Common myeloid progenitor, CD34-positive (primary cell): ENCODE measurements at regions of chr6 and their contacts with region 1.

Region 1: DNA sequence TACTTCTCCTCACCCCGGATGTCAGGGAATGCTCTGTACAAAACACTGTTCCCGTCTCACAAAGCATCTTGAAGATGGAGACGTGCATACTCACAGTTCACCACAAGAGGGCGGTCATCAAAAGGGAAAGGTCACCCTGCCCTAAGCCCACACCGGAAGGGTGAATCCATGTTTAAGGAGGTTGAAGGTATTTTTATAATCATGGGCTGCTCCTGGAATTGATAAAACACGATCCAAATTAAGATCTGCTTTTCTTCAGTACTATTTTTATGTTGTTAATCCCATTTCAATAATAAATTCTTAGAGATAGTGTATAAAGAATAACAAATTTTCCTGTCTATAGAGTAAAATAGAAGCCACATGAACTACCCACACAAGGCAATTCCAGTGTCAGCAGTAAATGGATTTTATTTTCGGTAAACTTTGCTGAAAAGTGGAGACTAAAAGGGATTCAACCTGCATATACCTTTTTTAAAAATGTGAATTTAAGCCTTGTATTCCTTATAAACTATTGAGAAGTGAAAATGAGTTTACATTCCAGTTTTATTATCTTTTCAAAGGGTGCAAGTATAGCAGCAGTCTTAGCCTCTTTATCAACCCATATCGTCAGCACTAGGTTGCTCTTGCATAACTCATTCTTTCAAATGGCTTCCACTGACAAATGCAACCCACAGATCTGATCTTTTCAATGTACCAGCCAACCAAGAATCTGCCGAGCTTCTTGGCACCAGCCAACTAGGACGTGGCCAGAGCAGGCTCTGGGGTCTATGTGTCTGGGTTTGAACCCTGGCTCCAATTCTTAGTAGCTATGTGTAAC is 79.7 kb upstream of the MBOAT1 start:
- DNase-seq: peak; percentile 76 to 82 (median 79)
- H3K4me3 ChIP-seq: peak overlapping the region in 1 of 7 experiments; percentile 64
- H3K27ac ChIP-seq: no peak overlapping the region
- H3K4me1 ChIP-seq: peaks cover 0 to 8% (median 3%) of the 10 kb centered on the region in 4 experiments
- H3K27me3 ChIP-seq: no peaks in the 10 kb centered on the region

Region 2: GRCh38 chr6:20266851-20267608 is 24.9 kb before region 1 on chr6:
- CTCF ChIA-PET with region 1: no interaction called
- POLR2A ChIA-PET with region 1: no interaction called
- DNase-seq: peak; percentile 54 to 86 (median 77)
- H3K4me3 ChIP-seq: peak overlapping the region in 3 of 7 experiments; percentile 14 to 20 (median 17)
- H3K27ac ChIP-seq: no peak overlapping the region
- H3K4me1 ChIP-seq: peaks cover 0 to 16% (median 8%) of the 10 kb centered on the region in 4 experiments
- H3K27me3 ChIP-seq: no peaks in the 10 kb centered on the region

Region 3: DNA sequence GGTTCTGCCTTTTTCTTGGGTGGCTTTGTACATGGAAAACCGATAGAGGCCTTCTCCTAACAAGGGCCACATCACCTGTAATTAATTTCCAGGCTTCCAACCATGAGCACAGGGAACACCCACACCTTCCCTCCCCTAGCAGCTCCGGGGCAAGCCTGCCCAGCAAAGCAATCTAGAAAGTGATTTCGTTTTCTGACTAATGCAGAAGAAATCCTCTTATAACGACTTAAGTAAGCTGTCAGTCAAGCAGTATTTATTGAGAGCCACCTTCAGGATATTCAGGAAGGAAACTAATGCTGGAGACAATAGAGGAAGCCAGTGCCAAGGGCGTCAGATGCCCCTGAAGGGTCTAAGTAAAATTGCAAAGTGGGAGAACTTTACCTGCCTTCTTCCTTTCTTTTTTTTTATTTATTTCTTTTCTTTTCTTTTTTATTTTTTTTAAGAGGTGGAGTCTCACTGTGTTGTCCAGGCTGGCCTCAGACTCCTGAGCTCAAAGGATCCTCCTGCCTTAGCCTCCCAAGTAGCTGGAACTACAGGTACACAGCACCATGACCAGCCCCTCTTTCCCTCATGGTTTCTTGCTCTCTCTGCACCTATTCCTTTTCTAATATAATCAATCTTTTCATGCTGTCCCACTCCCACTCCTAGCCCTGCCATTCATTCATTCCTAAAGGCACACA is 12.2 kb before region 1 on chr6:
- CTCF ChIA-PET with region 1: interaction called, 19 read pairs
- POLR2A ChIA-PET with region 1: no interaction called
- DNase-seq: peak in 1 of 3 donors; percentile 32
- H3K4me3 ChIP-seq: no peak overlapping the region
- H3K27ac ChIP-seq: no peak overlapping the region
- H3K4me1 ChIP-seq: peaks cover 6 to 26% (median 12%) of the 10 kb centered on the region in 4 experiments
- H3K27me3 ChIP-seq: no peaks in the 10 kb centered on the region

Region 4: GRCh38 chr6:20534295-20535262 is 242.6 kb after region 1 on chr6 and contains the start of gene CDKAL1:
- CTCF ChIA-PET with region 1: interaction called, 21 read pairs
- POLR2A ChIA-PET with region 1: interaction called, 3 read pairs
- DNase-seq: peak; percentile 93 to 96 (median 94)
- H3K4me3 ChIP-seq: peak within 1 kb of the TSS; percentile 89 to 100 (median 92)
- H3K27ac ChIP-seq: peak within 1 kb of the TSS; percentile 93 to 95
- H3K4me1 ChIP-seq: peaks cover 4 to 26% (median 21%) of the 10 kb centered on the region in 4 experiments
- H3K27me3 ChIP-seq: no peaks in the 10 kb centered on the region